OCI-LY7 (cell line): ENCODE measurements at regions of chr9 and their contacts with region 1.

Region 1: DNA sequence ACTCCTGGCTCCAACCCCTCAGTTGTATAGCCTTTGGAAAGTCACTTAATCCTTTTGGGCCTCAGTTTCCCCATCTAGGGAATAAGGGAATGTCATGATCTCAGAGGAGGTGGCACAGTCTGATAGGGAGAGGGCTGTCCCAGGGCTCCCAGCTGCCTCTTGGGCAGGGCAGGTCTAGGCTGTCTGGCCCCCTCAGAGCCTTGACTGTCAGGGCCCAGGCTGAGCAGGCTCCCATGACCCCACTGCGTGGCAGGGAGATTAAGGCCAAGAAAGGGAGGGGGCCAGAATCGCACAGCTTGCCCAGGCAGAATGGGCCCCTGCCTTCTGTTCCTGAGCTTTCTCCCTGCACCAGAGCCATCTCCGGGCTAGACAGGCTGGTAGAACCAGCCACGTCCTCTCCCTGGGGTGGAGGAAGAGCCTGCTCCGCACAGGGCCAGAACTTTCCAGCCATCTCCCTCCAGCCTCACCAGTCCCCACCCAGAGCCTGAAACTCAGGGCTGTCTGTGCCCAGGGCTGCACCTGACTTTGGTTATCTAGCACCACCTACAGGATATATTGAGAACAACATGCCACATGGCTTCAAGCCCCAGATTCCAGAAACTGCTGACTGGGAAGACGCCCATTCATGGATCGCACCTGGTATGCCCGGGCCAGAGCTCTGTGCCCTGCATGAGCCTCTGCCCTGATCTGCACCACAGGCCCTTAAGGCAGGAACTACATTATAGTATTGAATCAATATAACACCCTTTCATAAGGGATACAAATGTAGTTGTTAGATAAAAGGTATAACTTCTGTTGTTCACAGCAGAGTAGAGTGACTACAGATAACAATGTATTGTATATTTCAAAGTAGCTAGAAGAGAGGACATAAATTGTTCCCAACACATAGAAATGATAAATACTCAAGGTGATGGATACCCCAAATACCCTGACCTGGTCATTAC is 32.0 kb downstream of the NAIF1 start:
- DNase-seq: peak; percentile 90
- H3K4me3 ChIP-seq: no peak overlapping the region
- H3K27ac ChIP-seq: peak overlapping the region; percentile 20
- H3K4me1 ChIP-seq: peaks cover 45% of the 10 kb centered on the region
- CTCF ChIP-seq: peak; percentile 97

Region 2: GRCh38 chr9:127930231-127931091 is 104.6 kb before region 1 on chr9 and contains the start of gene PIP5KL1:
- CTCF ChIA-PET with region 1: no interaction called
- POLR2A ChIA-PET with region 1: no interaction called
- intact Hi-C with region 1: loop called (anchors 1 kb)
- DNase-seq: peak; percentile 84
- H3K4me3 ChIP-seq: peak within 1 kb of the TSS; percentile 67
- H3K27ac ChIP-seq: no peak within 1 kb of the TSS
- H3K4me1 ChIP-seq: peaks cover 47% of the 10 kb centered on the region
- CTCF ChIP-seq: no peak
- total RNA-seq, gene PIP5KL1: 0.59 and 0.95 TPM in 2 replicates

Region 3: DNA sequence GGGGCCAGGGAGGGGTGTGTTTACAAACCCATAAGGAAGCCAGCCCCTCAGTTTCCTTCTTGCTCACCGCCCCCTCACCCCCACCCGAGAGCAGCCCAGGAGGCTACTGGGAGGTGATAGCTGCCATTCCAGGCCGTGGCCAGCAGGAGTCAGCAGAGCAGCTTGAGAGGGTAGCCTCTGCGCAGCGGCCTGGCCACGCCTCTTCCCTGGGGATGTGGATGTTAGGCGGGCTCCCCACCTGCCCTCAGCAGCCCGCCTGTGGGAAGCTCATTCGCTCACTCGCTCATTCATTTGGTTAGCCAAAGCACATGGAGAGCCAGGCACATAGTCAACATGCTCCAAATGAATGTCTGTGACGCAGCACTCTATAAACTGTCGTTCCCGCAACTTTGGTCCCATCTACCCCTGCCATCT is 91.4 kb before region 1 on chr9:
- CTCF ChIA-PET with region 1: interaction called, 10 read pairs
- POLR2A ChIA-PET with region 1: interaction called, 3 read pairs
- intact Hi-C with region 1: loop called (anchors 1 kb)
- DNase-seq: peak; percentile 87
- H3K4me3 ChIP-seq: no peak overlapping the region
- H3K27ac ChIP-seq: peak overlapping the region; percentile 45
- H3K4me1 ChIP-seq: peaks cover 23% of the 10 kb centered on the region
- CTCF ChIP-seq: peak; percentile 92

Region 4: DNA sequence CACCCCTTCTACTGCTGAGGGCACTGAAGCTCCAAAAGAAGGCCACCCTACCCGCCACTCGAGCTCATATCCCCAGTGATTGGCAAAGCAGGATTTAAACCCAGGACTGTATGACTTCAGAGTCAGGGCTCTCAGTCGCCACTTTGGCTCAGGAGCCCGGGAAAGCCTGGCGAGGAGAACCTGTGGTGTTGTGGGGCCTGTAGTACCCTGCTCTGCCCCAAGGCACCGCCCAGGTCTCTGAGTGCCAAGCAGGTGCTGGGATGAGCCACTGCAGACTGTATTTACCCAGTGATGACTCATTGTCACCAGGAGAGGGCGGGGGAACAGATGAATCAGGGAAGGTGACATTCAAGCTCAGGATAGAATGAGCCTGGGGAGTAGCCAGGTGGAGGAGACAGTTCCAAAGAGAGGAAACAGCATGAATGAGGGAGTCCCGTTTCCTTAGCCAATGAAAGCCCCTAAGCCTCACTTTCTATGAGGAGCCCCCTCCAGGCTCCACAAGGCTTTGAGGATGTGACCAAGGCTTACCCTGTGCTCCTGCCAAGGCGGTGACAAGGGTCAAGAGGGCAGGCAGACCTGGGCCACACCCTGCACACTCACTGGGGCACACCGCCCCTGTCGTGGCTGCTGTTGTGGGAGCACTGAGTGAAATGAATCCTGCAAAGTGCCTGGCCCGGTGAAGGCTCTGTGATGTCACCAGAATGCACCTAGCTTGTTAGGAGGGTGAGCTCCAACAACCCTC is 79.6 kb before region 1 on chr9:
- CTCF ChIA-PET with region 1: interaction called, 15 read pairs
- POLR2A ChIA-PET with region 1: interaction called, 12 read pairs
- intact Hi-C with region 1: loop called (anchors 1 kb)
- DNase-seq: peak; percentile 81
- H3K4me3 ChIP-seq: no peak overlapping the region
- H3K27ac ChIP-seq: no peak overlapping the region
- H3K4me1 ChIP-seq: peaks cover 20% of the 10 kb centered on the region
- CTCF ChIP-seq: peak; percentile 80

Region 5: GRCh38 chr9:128015696-128016095 is 19.4 kb before region 1 on chr9:
- CTCF ChIA-PET with region 1: no interaction called
- POLR2A ChIA-PET with region 1: no interaction called
- intact Hi-C with region 1: no loop called
- DNase-seq: no peak
- H3K4me3 ChIP-seq: no peak overlapping the region
- H3K27ac ChIP-seq: no peak overlapping the region
- H3K4me1 ChIP-seq: peaks cover 15% of the 10 kb centered on the region
- CTCF ChIP-seq: no peak

Region 6: GRCh38 chr9:128117613-128118471 is 82.7 kb after region 1 on chr9:
- CTCF ChIA-PET with region 1: no interaction called
- POLR2A ChIA-PET with region 1: no interaction called
- intact Hi-C with region 1: loop called (anchors 2 kb)
- DNase-seq: peak; percentile 92
- H3K4me3 ChIP-seq: no peak overlapping the region
- H3K27ac ChIP-seq: no peak overlapping the region
- H3K4me1 ChIP-seq: no peaks in the 10 kb centered on the region
- CTCF ChIP-seq: peak; percentile 100